ENCODE measurements at regions of chr17 and their contacts with region 1.

Region 1: GRCh38 chr17:79393358-79394202 is 217.3 kb downstream of the RBFOX3 start:
- DNase-seq: peak; percentile 81 to 89
- ATAC-seq: peak; percentile 73 to 87 (median 82)
- H3K4me3 ChIP-seq: no peak overlapping the region
- H3K27ac ChIP-seq: no peak overlapping the region
- H3K4me1 ChIP-seq: no peaks in the 10 kb centered on the region
- H3K27me3 ChIP-seq: peaks cover 0 to 83% (median 28%) of the 10 kb centered on the region in 3 donors
- CTCF ChIP-seq: peak; percentile 85

Region 2: GRCh38 chr17:79065105-79065670 is 328.4 kb before region 1 on chr17:
- intact Hi-C with region 1: loop called in 1 of 2 experiments (anchors 5 kb)
- DNase-seq: no peak
- ATAC-seq: peak; percentile 60 to 86 (median 74)
- H3K4me3 ChIP-seq: no peak overlapping the region
- H3K27ac ChIP-seq: no peak overlapping the region
- H3K4me1 ChIP-seq: no peaks in the 10 kb centered on the region
- H3K27me3 ChIP-seq: no peaks in the 10 kb centered on the region
- CTCF ChIP-seq: peak; percentile 73

Region 3: GRCh38 chr17:79087428-79088143 is 306.0 kb before region 1 on chr17:
- intact Hi-C with region 1: loop called (anchors 1 to 5 kb)
- DNase-seq: peak; percentile 65 to 88
- ATAC-seq: peak; percentile 62 to 79 (median 74)
- H3K4me3 ChIP-seq: no peak overlapping the region
- H3K27ac ChIP-seq: no peak overlapping the region
- H3K4me1 ChIP-seq: peaks cover 5% of the 10 kb centered on the region
- H3K27me3 ChIP-seq: peaks cover 0 to 20% (median 0%) of the 10 kb centered on the region in 3 donors
- CTCF ChIP-seq: peak; percentile 92

Region 4: GRCh38 chr17:79188048-79188447 is 205.5 kb before region 1 on chr17:
- intact Hi-C with region 1: loop called (anchors 2 kb)
- DNase-seq: no peak
- ATAC-seq: peak; percentile 64 to 70 (median 67)
- H3K4me3 ChIP-seq: no peak overlapping the region
- H3K27ac ChIP-seq: no peak overlapping the region
- H3K4me1 ChIP-seq: peaks cover 6% of the 10 kb centered on the region
- H3K27me3 ChIP-seq: peaks cover 2 to 90% (median 25%) of the 10 kb centered on the region in 3 donors
- CTCF ChIP-seq: peak; percentile 65

Region 5: GRCh38 chr17:79294459-79295071 is 99.0 kb before region 1 on chr17:
- intact Hi-C with region 1: no loop called
- DNase-seq: peak; percentile 66 to 78
- ATAC-seq: peak; percentile 68 to 73 (median 71)
- H3K4me3 ChIP-seq: no peak overlapping the region
- H3K27ac ChIP-seq: no peak overlapping the region
- H3K4me1 ChIP-seq: no peaks in the 10 kb centered on the region
- H3K27me3 ChIP-seq: peaks cover 0 to 41% (median 0%) of the 10 kb centered on the region in 3 donors
- CTCF ChIP-seq: no peak

Region 6: GRCh38 chr17:79305768-79306423 is 87.7 kb before region 1 on chr17:
- intact Hi-C with region 1: loop called (anchors 5 kb)
- DNase-seq: peak; percentile 66 to 88
- ATAC-seq: peak; percentile 91 to 94 (median 93)
- H3K4me3 ChIP-seq: peak overlapping the region; percentile 31
- H3K27ac ChIP-seq: peak overlapping the region; percentile 86
- H3K4me1 ChIP-seq: peaks cover 33% of the 10 kb centered on the region
- H3K27me3 ChIP-seq: peaks cover 0 to 6% (median 1%) of the 10 kb centered on the region in 3 donors
- CTCF ChIP-seq: peak; percentile 16

Region 7: DNA sequence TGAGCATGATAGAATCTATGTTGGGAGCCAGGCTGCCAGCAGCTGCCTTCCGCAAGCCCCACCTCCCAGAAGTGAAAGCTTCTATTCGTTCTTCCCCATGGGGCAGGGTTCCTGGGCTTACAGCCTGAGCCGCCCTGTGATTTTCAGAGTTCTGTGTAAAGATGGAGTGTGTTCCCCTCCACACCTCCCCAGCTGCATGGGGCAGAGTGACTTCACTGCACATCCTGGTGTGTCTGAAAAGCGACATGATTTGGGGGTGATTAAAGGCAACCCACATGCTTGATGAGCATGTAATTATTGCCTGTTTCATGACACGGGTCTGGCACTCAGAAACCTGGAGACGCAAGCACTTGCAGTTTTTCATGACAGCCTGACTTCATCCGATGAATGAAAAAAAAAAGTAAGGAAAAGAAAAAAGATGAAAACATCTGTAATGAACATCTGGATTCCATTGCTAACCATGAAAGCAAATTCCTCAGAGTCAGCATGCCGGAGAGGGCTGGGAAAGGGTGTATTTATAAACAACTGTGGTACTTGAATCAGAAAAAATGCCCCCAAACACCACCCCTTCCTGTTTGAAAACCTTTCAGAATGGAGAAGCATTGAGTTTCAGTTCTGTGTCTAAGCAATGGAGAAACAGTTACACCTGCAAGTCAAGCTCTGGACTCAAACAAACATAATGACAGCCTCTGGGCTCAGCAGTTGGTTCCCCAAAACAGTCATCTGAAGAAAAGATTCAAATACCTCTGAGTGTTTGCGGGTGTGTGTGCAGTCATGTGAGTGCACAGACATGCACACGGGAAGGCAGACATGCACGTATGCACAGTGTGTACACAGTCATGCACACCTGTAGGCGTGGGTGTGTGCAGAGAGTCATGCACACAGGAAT is 53.0 kb before region 1 on chr17:
- intact Hi-C with region 1: no loop called
- DNase-seq: peak in 1 of 2 donors; percentile 25
- ATAC-seq: no peak
- H3K4me3 ChIP-seq: no peak overlapping the region
- H3K27ac ChIP-seq: no peak overlapping the region
- H3K4me1 ChIP-seq: no peaks in the 10 kb centered on the region
- H3K27me3 ChIP-seq: peaks cover 0 to 53% (median 4%) of the 10 kb centered on the region in 3 donors
- CTCF ChIP-seq: no peak